Breast epithelium (tissue), 4 donors: ENCODE measurements at regions of chr9 and their contacts with region 1.

Region 1: GRCh38 chr9:109821711-109822110 is 41.7 kb downstream of the PALM2AKAP2 start:
- DNase-seq: no peak
- H3K4me3 ChIP-seq: no peak overlapping the region
- H3K27ac ChIP-seq: no peak overlapping the region
- H3K4me1 ChIP-seq: no peaks in the 10 kb centered on the region
- H3K27me3 ChIP-seq: no peaks in the 10 kb centered on the region
- CTCF ChIP-seq: no peak
- POLR2A ChIP-seq: no peak

Region 2: DNA sequence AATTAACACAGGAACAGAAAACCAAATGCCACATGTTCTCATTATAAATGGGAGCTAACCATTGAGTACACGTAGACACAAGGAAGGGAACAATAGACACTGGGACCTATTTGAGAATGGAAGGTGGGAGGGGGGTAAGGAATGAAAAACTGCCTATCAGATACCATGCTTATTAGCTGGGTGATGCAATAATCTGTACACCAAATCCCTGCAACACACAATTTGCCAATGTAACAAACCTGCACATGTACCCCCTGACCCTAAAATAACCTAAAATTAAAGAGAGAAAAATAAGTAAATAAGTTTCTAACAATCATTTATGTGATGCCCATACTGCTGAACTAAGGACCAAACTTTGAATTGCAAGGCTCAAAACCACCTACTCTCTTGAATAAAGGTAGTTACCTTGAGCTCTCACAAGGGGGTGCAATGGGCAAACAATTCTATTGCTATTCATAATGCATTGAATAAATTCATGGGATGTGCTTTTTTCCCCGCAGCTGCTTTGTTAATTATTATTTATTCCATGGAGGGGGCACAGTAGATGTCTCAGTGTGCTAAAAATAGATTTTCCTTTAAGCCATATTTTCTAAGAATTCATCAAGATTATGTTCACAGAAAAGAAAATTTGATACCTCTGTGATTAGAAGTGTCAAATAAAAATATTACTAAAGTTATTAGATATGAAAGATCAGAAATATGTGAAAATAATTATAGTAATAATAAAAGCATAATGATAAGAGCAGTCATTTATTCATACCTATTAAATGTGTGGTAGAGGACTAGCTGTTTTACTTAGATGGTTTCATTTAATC is 247.4 kb before region 1 on chr9:
- intact Hi-C with region 1: loop called (anchors 10 kb)
- DNase-seq: no peak
- H3K4me3 ChIP-seq: no peak overlapping the region
- H3K27ac ChIP-seq: no peak overlapping the region
- H3K4me1 ChIP-seq: no peaks in the 10 kb centered on the region
- H3K27me3 ChIP-seq: no peaks in the 10 kb centered on the region
- CTCF ChIP-seq: peak in 2 of 3 donors; percentile 70 to 81
- POLR2A ChIP-seq: no peak

Region 3: DNA sequence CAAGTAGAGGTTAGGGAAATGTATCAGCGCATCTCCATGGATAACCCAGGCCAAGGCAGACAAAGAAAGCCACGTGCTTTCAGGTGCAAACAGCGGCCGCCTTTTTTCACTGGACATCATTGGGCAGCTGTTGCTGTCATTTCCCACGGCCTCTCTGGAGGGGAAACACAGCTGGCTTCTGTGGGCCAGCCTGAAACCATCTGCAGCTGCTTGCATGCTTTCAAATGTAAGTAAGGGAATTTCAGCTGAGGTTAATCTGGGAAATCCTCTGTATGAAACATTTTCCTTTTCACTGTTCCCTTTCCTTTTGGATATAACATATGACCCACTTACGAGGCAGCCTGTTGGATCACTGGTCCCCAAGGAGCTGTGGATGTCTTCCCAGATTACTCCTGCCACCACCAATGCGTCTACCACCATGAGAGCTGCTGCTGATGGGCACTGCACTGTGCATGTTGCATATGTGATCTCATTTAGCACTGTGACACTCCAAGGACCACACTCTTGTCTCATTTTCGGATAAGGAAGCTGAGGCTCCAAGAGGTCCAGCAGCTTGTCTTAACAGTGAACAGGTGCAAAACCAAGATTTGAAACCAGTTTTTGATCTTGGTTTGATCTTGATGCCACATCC is 279.9 kb after region 1 on chr9:
- intact Hi-C with region 1: no loop called
- DNase-seq: no peak
- H3K4me3 ChIP-seq: no peak overlapping the region
- H3K27ac ChIP-seq: peak overlapping the region in 1 of 2 donors; percentile 32
- H3K4me1 ChIP-seq: no peaks in the 10 kb centered on the region
- H3K27me3 ChIP-seq: no peaks in the 10 kb centered on the region
- CTCF ChIP-seq: no peak
- POLR2A ChIP-seq: no peak